Aorta (tissue), 5 donors: ENCODE measurements at regions of chr19 and their contacts with region 1.

Region 1: GRCh38 chr19:20565321-20566018 is at the start of gene ZNF737:
- DNase-seq: peak; percentile 97
- ATAC-seq: peak; percentile 95
- H3K4me3 ChIP-seq: peak within 1 kb of the TSS; percentile 62 to 71
- H3K27ac ChIP-seq: peak within 1 kb of the TSS; percentile 29 to 89
- H3K4me1 ChIP-seq: no peaks in the 10 kb centered on the region
- H3K27me3 ChIP-seq: no peaks in the 10 kb centered on the region
- total RNA-seq, gene ZNF737: 6.9 to 15.4 TPM

Region 2: DNA sequence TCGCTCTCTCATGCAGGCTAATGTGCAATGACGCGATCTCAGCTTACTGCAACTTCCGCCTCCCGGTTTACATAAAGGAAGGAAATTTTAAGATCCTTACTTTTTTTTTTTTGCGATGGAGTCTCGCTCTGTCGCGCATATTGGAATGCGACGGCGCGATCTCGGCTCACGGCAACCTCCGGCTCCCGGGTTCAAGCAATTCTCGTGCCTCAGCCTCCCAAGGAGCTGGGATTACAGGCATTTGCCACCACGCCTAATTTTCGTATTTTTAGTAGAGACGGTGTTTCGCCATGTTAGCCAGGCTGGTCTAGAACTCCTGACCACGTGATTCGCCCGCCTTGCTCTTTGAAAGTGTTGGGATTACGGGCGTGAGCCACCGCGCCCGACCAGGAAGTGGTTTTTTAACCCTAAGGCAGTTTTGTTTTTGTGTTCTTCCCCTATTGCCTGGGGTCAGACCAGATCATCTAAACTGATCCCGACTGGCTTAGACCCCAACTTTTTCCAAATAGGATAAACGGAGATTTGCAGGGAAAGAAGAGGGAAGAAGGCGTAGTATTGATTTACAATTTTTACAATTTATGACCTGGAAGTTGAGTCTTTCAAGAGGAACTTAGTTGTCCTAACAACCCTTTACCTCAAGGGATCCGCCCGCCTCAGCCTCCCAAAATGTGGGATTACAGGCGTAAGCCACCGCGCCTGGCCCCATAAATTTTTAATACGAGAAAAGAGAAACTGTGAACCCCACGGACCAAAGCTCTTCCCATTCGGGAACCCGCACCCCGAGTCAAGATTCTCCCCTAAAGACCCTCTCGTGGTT is 141.9 kb before region 1 on chr19:
- intact Hi-C with region 1: loop called in 1 of 2 experiments (anchors 5 kb)
- DNase-seq: peak; percentile 70 to 86
- ATAC-seq: peak; percentile 82
- H3K4me3 ChIP-seq: peak overlapping the region; percentile 74 to 84
- H3K27ac ChIP-seq: peak overlapping the region; percentile 77 to 90
- H3K4me1 ChIP-seq: no peaks in the 10 kb centered on the region
- H3K27me3 ChIP-seq: no peaks in the 10 kb centered on the region

Region 3: DNA sequence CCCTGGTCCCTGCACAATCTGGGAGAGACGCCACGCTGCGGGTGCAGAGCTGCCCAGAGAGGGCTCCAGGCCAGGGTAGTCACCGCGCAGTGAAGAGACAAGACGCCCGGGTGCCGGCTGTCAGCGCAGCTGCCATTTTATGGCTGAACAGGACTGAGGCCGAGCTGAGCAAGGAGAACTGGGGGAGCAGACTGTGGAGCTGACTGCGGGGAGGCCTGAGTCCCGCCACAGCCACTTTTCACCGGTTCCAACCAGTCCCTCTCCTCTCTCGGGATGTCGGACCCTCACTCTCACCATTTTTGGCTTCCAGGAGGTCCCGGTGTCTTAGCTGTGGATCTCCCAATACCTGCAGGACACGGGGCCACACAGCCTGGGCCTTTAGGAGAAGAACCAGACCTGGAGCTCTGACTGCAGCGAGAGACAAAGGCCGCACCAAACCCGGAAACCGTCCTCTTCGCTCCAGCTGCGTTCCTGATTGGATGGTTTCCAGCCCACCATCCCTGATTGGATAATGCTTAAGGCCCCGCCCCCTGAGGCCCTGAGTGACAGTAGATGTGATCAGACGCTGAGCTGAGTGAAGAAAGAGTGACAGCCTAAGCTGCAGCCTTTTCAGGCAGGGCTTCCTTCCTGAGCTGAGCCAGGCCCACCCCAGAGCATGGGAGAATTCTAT is 95.8 kb after region 1 on chr19 and contains the start of gene ZNF626:
- intact Hi-C with region 1: loop called (anchors 10 kb)
- DNase-seq: peak; percentile 96 to 97
- ATAC-seq: peak; percentile 97
- H3K4me3 ChIP-seq: peak within 1 kb of the TSS; percentile 14 to 97
- H3K27ac ChIP-seq: peak within 1 kb of the TSS; percentile 55 to 67
- H3K4me1 ChIP-seq: no peaks in the 10 kb centered on the region
- H3K27me3 ChIP-seq: no peaks in the 10 kb centered on the region
- total RNA-seq, gene ZNF626: 15.0 to 16.4 TPM

Region 4: DNA sequence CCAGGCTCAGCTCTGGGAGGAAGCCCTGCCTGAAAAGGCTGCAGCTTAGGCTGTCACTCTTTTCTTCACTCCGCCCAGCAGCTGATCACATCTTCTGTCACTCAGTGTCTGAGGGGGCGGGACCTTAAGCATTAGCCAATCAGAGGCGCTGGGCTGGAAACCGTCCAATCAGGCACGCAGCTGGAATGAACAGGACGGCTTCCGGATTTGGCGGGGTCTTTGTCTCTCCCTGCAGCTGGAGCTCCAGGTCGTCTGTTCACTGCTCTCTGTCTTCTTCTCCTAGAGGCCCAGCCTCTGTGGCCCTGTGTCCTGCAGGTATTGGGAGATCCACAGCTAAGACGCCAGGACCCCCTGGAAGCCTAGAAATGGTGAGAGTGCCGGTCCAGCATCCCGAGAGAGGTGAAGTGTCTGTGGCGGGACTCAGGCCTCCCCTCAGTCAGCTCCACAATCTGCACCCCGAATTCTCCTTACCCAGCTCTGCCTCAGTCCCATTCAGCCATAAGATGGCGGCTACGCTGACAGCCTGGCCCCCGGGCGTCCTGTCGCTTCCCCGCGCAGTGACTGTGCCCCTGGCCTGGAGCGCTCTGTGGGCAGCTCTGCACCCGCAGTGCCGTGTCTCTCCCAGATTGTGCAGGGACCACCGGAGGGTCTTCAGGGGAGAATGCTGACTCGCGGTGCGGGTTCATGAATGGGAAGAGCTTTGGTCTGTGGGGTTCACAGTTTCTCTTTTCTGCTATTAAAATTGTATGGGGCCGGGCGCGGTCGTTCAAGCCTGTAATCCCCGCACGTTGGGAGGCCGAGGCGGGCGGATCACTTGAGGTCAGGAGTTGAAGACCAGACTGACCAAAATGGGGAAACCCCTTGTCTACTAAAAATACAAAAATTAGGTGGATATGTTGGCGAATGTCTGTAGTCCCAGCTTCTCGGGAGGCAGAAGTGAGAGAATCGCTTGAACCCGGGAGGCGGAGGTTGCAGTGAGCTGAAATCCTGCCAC is 210.9 kb after region 1 on chr19 and contains the start of gene ZNF66:
- intact Hi-C with region 1: loop called in 1 of 2 experiments (anchors 10 kb)
- DNase-seq: peak; percentile 97 to 98
- ATAC-seq: peak; percentile 98
- H3K4me3 ChIP-seq: peak within 1 kb of the TSS; percentile 5 to 63
- H3K27ac ChIP-seq: peak within 1 kb of the TSS in 1 of 2 donors; percentile 25
- H3K4me1 ChIP-seq: no peaks in the 10 kb centered on the region
- H3K27me3 ChIP-seq: no peaks in the 10 kb centered on the region
- total RNA-seq, gene ZNF66: 3.7 to 7.7 TPM